K562 (cell line): ENCODE measurements at regions of chr11 and their contacts with region 1.

Region 1: DNA sequence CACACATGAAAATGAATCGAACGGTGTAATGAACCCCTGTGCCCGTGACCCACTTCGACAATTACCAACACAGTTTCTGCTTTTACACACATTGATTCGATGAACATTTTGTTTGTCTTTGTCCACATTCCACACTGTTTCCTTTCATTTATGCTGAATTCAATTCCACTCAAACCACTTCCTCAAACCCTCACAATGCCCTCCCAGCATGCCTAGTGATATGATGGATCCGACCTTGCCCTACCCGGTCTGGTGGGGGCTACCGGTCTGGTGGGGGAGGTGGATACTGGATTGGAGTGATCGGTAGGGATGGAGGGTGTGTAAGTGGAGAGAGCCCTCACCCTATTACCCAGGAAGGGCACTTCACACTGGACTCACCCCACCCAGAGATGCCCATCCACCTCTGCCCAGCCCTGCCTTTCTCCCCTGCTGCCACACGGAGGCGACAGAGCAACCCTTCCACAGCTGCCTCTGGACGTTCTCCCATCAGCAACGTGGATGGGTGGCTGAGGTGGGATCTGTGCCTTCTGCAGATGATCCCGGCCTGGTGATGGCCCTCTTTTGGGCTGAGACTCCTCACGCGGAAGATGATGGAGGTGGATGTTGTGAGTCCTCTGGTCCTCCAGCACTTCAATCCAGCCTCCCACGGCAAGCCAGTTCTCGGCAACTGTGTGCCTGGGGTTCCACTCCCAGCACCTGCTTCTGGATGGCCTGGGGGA is 33.0 kb upstream of the P2RY2 start:
- DNase-seq: peak; percentile 53 to 63 (median 58)
- ATAC-seq: peak; percentile 79
- H3K4me3 ChIP-seq: no peak overlapping the region
- H3K27ac ChIP-seq: no peak overlapping the region
- H3K4me1 ChIP-seq: peaks cover 16 to 25% of the 10 kb centered on the region in 2 experiments; a peak in 4 of 5 replicates
- H3K27me3 ChIP-seq: peaks cover 7 to 8% of the 10 kb centered on the region in 2 experiments; a peak in 4 of 5 replicates
- CTCF ChIP-seq: peak; percentile 77 to 92 (median 87)
- EP300 ChIP-seq: no peak
- POLR2A ChIP-seq: no peak
- RAD21 ChIP-seq: peak; percentile 51 to 79

Region 2: GRCh38 chr11:73236854-73237253 is 51.7 kb after region 1 on chr11:
- CTCF ChIA-PET with region 1: no interaction called
- POLR2A ChIA-PET with region 1: no interaction called
- in situ Hi-C with region 1: loop called (anchors 5 kb)
- intact Hi-C with region 1: loop called (anchors 2 kb)
- DNase-seq: peak; percentile 54 to 71 (median 62)
- ATAC-seq: peak; percentile 88
- H3K4me3 ChIP-seq: no peak overlapping the region
- H3K27ac ChIP-seq: no peak overlapping the region
- H3K4me1 ChIP-seq: peaks cover 0 to 12% of the 10 kb centered on the region in 2 experiments; a peak in 2 of 5 replicates
- H3K27me3 ChIP-seq: peaks cover 6 to 58% of the 10 kb centered on the region in 2 experiments; a peak in 3 of 5 replicates
- CTCF ChIP-seq: peak; percentile 73 to 89 (median 77)
- EP300 ChIP-seq: no peak
- POLR2A ChIP-seq: no peak
- RAD21 ChIP-seq: peak in 1 of 2 experiments; percentile 74; a peak in 2 of 4 replicates

Region 3: GRCh38 chr11:73242251-73243079 is 57.4 kb after region 1 on chr11:
- CTCF ChIA-PET with region 1: interaction called, 8 read pairs
- POLR2A ChIA-PET with region 1: no interaction called
- in situ Hi-C with region 1: loop called (anchors 5 kb)
- intact Hi-C with region 1: loop called (anchors 2 kb)
- DNase-seq: peak; percentile 78 to 83 (median 79)
- ATAC-seq: peak; percentile 96
- H3K4me3 ChIP-seq: peak overlapping the region; percentile 21; the same call in 1 of the 2 replicates
- H3K27ac ChIP-seq: no peak overlapping the region; the same call in 2 of the 3 replicates
- H3K4me1 ChIP-seq: peaks cover 0 to 3% of the 10 kb centered on the region in 2 experiments; a peak in 1 of 5 replicates
- H3K27me3 ChIP-seq: peaks cover 0 to 28% of the 10 kb centered on the region in 2 experiments; a peak in 4 of 5 replicates
- CTCF ChIP-seq: peak; percentile 83 to 89 (median 88)
- EP300 ChIP-seq: no peak
- POLR2A ChIP-seq: no peak
- RAD21 ChIP-seq: peak; percentile 68 to 81

Region 4: DNA sequence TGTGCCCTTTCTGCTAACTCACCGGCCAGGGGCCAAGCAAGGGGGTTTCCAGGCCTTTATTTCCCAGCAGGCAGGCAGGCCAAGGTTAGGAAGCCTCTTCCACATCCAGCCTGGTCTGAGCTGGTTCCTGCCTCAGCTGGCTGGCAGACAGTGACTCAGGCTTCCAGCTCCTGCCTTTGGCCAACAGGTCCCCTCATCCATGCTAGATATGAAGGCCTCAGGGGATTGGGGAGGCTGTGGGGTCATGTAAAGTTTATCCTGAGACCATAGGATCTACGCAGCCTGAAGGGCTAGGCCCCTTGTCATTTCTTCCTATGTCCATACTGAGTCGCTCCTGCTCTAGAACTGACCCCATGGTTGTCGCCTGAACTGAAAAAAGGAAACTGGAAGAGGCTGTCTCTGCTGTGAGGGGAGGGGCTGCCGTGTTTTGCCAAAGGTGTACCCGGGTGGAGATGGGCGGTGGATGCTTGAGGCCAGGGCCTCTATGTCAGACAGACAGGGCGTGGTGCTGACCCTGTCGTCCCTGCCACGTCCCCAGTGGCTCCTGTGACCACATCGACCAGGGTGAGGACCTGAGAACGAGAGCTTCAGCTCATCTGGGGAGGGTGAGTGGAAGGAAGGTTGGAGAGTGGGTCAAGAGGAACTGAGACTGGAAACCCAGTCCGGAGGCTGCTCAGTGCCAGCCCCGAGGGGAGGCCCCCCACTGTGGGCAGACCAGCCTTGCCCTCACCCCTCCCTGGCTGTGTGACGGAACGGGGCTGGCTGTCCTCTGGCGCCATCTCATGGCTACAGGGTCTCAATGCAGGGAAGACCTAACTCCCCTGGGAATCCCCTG is 104.0 kb after region 1 on chr11:
- CTCF ChIA-PET with region 1: interaction called, 6 read pairs
- POLR2A ChIA-PET with region 1: no interaction called
- in situ Hi-C with region 1: loop called (anchors 5 kb)
- intact Hi-C with region 1: loop called (anchors 2 kb)
- DNase-seq: peak; percentile 80 to 92 (median 90)
- ATAC-seq: peak; percentile 85
- H3K4me3 ChIP-seq: no peak overlapping the region
- H3K27ac ChIP-seq: peak overlapping the region; percentile 44
- H3K4me1 ChIP-seq: peaks cover 19 to 20% of the 10 kb centered on the region in 2 experiments; a peak in 4 of 5 replicates
- H3K27me3 ChIP-seq: peaks cover 0 to 4% of the 10 kb centered on the region in 2 experiments; a peak in 1 of 5 replicates
- CTCF ChIP-seq: peak; percentile 92 to 93 (median 92)
- EP300 ChIP-seq: no peak
- POLR2A ChIP-seq: no peak
- RAD21 ChIP-seq: peak; percentile 79 to 90

Region 5: GRCh38 chr11:73295231-73295995 is 110.3 kb after region 1 on chr11:
- CTCF ChIA-PET with region 1: no interaction called
- POLR2A ChIA-PET with region 1: no interaction called
- in situ Hi-C with region 1: loop called (anchors 5 kb)
- intact Hi-C with region 1: no loop called
- DNase-seq: peak; percentile 71 to 80 (median 80)
- ATAC-seq: peak; percentile 86
- H3K4me3 ChIP-seq: no peak overlapping the region
- H3K27ac ChIP-seq: no peak overlapping the region
- H3K4me1 ChIP-seq: peaks cover 0 to 10% of the 10 kb centered on the region in 2 experiments; a peak in 2 of 5 replicates
- H3K27me3 ChIP-seq: peaks cover 24 to 33% of the 10 kb centered on the region in 2 experiments
- CTCF ChIP-seq: peak; percentile 86 to 97 (median 94)
- EP300 ChIP-seq: no peak
- POLR2A ChIP-seq: no peak
- RAD21 ChIP-seq: peak; percentile 51 to 75

Region 6: DNA sequence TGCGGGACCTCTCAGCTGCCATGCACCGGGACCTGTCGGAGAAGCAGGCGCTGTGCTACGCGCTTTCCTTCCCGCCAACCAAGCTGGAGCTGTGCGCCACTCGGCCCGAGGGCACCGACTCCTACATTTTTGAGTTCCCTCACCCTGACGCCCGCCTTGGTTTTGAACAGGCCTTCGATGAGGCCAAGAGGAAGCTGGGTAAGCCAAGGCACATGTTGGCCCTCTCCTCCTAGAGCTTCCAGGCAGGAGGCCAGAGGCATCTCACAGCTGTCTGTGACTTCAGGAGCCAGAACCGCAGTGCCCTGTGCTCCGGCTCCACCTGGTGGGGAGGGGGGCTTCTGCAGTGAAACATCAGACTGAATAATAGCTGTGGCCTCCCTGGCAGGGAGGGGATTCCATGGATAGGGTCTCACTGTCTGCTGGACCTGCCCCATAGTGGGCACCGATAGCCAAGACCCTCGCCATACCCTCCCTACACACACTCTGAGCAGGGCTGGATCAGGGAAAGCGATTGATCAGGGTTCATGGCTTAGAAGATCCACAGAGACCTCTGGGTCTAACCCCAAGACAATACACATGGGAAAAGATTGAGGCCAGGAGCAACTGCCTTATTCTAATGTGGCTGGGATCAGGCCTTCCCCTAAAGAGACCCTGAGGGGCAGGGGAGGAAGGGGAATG is 175.4 kb after region 1 on chr11:
- CTCF ChIA-PET with region 1: no interaction called
- POLR2A ChIA-PET with region 1: no interaction called
- in situ Hi-C with region 1: no loop called
- intact Hi-C with region 1: no loop called
- DNase-seq: peak; percentile 53 to 63 (median 56)
- ATAC-seq: peak; percentile 51
- H3K4me3 ChIP-seq: no peak overlapping the region
- H3K27ac ChIP-seq: no peak overlapping the region
- H3K4me1 ChIP-seq: peaks cover 0 to 30% of the 10 kb centered on the region in 2 experiments; a peak in 3 of 5 replicates
- H3K27me3 ChIP-seq: peaks cover 18 to 54% of the 10 kb centered on the region in 2 experiments
- CTCF ChIP-seq: peak; percentile 60 to 67 (median 67)
- EP300 ChIP-seq: no peak
- POLR2A ChIP-seq: no peak
- RAD21 ChIP-seq: peak in 1 of 2 experiments; percentile 43; a peak in 2 of 4 replicates

Region 7: GRCh38 chr11:73439002-73439843 is 254.1 kb after region 1 on chr11:
- CTCF ChIA-PET with region 1: no interaction called
- POLR2A ChIA-PET with region 1: no interaction called
- in situ Hi-C with region 1: no loop called
- intact Hi-C with region 1: no loop called
- DNase-seq: no peak
- ATAC-seq: no peak
- H3K4me3 ChIP-seq: no peak overlapping the region
- H3K27ac ChIP-seq: no peak overlapping the region
- H3K4me1 ChIP-seq: no peaks in the 10 kb centered on the region
- H3K27me3 ChIP-seq: peaks cover 0 to 6% of the 10 kb centered on the region in 2 experiments; a peak in 1 of 5 replicates
- CTCF ChIP-seq: no peak
- EP300 ChIP-seq: no peak
- POLR2A ChIP-seq: no peak
- RAD21 ChIP-seq: no peak